ENCODE measurements at regions of chr5 and their contacts with region 1.

Region 1: DNA sequence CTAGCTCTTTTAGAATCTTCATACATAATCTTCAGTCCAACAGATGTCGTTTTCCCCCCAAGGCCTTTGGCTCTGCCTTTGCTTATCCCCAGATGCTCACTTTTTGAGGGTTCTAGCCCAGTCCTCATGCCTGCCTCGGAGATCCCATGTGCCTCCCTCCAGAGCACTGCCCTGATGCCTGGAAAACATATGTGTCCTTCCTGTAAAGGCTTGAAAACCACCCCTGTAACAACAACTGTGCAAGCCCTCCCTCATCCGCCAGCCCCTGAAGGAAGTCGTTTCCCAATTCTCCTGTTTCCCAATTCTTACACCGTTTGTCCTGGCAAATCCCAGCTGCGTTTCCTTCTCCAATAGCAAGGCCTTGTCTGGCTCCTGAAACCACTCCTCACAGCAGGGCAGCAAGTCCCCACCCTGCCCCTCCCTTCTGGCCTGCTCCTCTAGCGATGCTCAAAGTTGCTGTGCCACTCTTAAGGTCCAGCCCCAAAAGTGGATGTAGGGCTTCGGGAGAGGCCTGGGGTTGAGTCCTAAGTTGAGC is 52.2 kb downstream of the SLC36A1 start:
- DNase-seq: no peak
- H3K4me3 ChIP-seq: no peak overlapping the region
- CTCF ChIP-seq: no peak

Region 2: DNA sequence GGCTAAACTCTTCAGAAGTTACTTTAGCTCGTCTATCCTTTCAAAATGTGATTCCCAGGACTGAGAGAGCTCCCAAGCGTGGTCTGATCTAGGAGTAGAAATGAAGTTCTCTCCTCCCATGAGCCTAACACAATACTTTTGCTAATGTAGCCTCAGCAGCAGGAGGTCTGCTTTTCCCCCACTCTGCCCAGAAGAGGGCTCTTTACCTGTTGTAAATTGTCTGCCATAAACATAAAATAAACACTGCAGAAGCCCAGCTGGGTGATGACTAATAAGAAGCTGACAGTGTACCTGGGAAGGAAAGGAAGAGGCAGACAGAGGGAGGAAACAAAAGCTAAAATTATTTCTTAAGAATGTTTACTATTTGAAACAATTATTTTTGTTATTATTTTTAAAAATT is 211.4 kb before region 1 on chr5:
- CTCF ChIA-PET with region 1: no interaction called
- POLR2A ChIA-PET with region 1: no interaction called
- DNase-seq: no peak
- H3K4me3 ChIP-seq: no peak overlapping the region
- CTCF ChIP-seq: no peak

Region 3: GRCh38 chr5:151477101-151477500 is 22.5 kb before region 1 on chr5:
- CTCF ChIA-PET with region 1: interaction called, 10 read pairs
- POLR2A ChIA-PET with region 1: no interaction called
- DNase-seq: no peak
- H3K4me3 ChIP-seq: no peak overlapping the region
- CTCF ChIP-seq: no peak

Measured in AG04449 (cell line).